ENCODE measurements at regions of chr1 and their contacts with region 1.

Region 1: GRCh38 chr1:232553050-232553754 is 76.7 kb downstream of the SIPA1L2 start:
- DNase-seq: peak; percentile 81 to 90 (median 88)
- ATAC-seq: peak; percentile 84 to 91 (median 90)
- H3K4me3 ChIP-seq: peak overlapping the region in 3 of 12 donors; percentile 13 to 26 (median 24)
- H3K27ac ChIP-seq: peak overlapping the region; percentile 24 to 80 (median 62)
- H3K4me1 ChIP-seq: peaks cover 3 to 83% (median 56%) of the 10 kb centered on the region in 12 donors
- H3K27me3 ChIP-seq: no peaks in the 10 kb centered on the region
- CTCF ChIP-seq: no peak
- POLR2A ChIP-seq: no peak

Region 2: GRCh38 chr1:231853588-231854207 is 699.5 kb before region 1 on chr1:
- intact Hi-C with region 1: loop called in 1 of 10 experiments (anchors 10 kb)
- DNase-seq: peak in 4 of 5 donors; percentile 36 to 84 (median 64)
- ATAC-seq: peak; percentile 53 to 62 (median 57)
- H3K4me3 ChIP-seq: no peak overlapping the region
- H3K27ac ChIP-seq: peak overlapping the region in 3 of 12 donors; percentile 20 to 47 (median 39)
- H3K4me1 ChIP-seq: peaks cover 0 to 33% (median 18%) of the 10 kb centered on the region in 12 donors
- H3K27me3 ChIP-seq: no peaks in the 10 kb centered on the region
- CTCF ChIP-seq: no peak
- POLR2A ChIP-seq: no peak

Region 3: DNA sequence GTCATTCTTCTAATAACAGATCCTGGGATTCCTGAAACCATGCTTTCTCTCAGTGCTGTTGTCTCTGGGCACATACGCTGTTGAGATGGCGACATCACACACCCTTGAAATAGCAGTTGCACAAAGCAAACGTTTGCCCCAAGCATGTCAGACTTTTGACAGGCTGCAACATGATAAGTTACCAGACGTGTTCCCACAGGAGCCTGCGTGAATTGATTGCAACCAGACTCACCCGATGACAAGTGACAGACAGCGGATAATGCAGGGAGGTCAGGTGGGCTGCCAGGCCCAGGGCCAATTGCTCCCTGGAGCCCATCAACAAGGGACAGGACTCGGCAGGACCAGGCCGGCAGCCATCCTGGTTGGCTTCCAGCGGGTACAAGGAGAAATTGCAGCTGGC is 234.1 kb before region 1 on chr1:
- intact Hi-C with region 1: loop called in 1 of 10 experiments (anchors 10 kb)
- DNase-seq: peak; percentile 87 to 95 (median 89)
- ATAC-seq: peak; percentile 95 to 96 (median 96)
- H3K4me3 ChIP-seq: no peak overlapping the region
- H3K27ac ChIP-seq: peak overlapping the region in 11 of 12 donors; percentile 5 to 95 (median 79)
- H3K4me1 ChIP-seq: peaks cover 0 to 17% (median 11%) of the 10 kb centered on the region in 12 donors
- H3K27me3 ChIP-seq: no peaks in the 10 kb centered on the region
- CTCF ChIP-seq: no peak
- POLR2A ChIP-seq: no peak

Region 4: GRCh38 chr1:232334246-232335210 is 218.7 kb before region 1 on chr1:
- intact Hi-C with region 1: no loop called
- DNase-seq: no peak
- ATAC-seq: no peak
- H3K4me3 ChIP-seq: no peak overlapping the region
- H3K27ac ChIP-seq: no peak overlapping the region
- H3K4me1 ChIP-seq: peaks cover 0 to 4% (median 1%) of the 10 kb centered on the region in 12 donors
- H3K27me3 ChIP-seq: no peaks in the 10 kb centered on the region
- CTCF ChIP-seq: no peak
- POLR2A ChIP-seq: no peak

Region 5: GRCh38 chr1:232457595-232457994 is 95.6 kb before region 1 on chr1:
- intact Hi-C with region 1: loop called in 1 of 10 experiments (anchors 10 kb)
- DNase-seq: no peak
- ATAC-seq: no peak
- H3K4me3 ChIP-seq: no peak overlapping the region
- H3K27ac ChIP-seq: peak overlapping the region in 2 of 12 donors; percentile 3 to 11
- H3K4me1 ChIP-seq: peaks cover 0 to 45% (median 20%) of the 10 kb centered on the region in 12 donors
- H3K27me3 ChIP-seq: no peaks in the 10 kb centered on the region
- CTCF ChIP-seq: no peak
- POLR2A ChIP-seq: no peak

Region 6: GRCh38 chr1:232508130-232508701 is 45.0 kb before region 1 on chr1:
- intact Hi-C with region 1: loop called in 1 of 10 experiments (anchors 5 kb)
- DNase-seq: peak in 1 of 5 donors; percentile 33
- ATAC-seq: peak in 3 of 4 donors; percentile 40 to 67 (median 65)
- H3K4me3 ChIP-seq: no peak overlapping the region
- H3K27ac ChIP-seq: peak overlapping the region in 1 of 12 donors; percentile 46
- H3K4me1 ChIP-seq: peaks cover 0 to 57% (median 30%) of the 10 kb centered on the region in 12 donors
- H3K27me3 ChIP-seq: no peaks in the 10 kb centered on the region
- CTCF ChIP-seq: peak in 6 of 12 donors; percentile 13 to 38 (median 30)
- POLR2A ChIP-seq: no peak

Region 7: DNA sequence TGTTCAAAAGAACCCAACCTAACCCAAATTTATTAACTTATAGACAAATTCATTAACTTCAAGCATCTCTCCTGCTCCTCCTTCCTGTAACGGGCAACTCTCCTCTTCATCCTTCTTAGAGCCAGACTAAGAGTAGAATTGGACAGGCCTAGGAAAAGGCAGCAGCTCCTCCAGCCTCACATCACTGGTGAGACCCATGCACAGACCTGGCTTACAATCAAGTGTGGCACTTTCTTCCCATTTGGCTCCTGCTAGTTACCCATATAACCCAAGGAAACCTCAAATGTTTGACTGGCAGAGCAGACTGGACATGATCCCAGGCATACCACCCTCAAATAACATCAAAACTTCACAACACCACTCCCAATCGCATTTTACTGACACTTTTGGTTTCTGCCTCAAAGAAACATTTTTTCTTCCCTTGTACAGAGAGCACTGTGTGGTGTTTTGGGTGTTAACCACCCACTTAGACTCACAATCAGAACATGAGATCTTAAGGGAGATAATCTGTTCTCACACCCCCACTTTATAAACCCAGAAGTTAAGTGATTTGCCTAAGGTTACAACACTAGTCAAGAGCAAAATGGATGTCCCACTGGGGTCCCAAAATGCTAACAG is 24.6 kb before region 1 on chr1:
- intact Hi-C with region 1: no loop called
- DNase-seq: no peak
- ATAC-seq: no peak
- H3K4me3 ChIP-seq: no peak overlapping the region
- H3K27ac ChIP-seq: peak overlapping the region in 1 of 12 donors; percentile 28
- H3K4me1 ChIP-seq: peaks cover 0 to 57% (median 25%) of the 10 kb centered on the region in 12 donors
- H3K27me3 ChIP-seq: no peaks in the 10 kb centered on the region
- CTCF ChIP-seq: no peak
- POLR2A ChIP-seq: no peak

Region 8: DNA sequence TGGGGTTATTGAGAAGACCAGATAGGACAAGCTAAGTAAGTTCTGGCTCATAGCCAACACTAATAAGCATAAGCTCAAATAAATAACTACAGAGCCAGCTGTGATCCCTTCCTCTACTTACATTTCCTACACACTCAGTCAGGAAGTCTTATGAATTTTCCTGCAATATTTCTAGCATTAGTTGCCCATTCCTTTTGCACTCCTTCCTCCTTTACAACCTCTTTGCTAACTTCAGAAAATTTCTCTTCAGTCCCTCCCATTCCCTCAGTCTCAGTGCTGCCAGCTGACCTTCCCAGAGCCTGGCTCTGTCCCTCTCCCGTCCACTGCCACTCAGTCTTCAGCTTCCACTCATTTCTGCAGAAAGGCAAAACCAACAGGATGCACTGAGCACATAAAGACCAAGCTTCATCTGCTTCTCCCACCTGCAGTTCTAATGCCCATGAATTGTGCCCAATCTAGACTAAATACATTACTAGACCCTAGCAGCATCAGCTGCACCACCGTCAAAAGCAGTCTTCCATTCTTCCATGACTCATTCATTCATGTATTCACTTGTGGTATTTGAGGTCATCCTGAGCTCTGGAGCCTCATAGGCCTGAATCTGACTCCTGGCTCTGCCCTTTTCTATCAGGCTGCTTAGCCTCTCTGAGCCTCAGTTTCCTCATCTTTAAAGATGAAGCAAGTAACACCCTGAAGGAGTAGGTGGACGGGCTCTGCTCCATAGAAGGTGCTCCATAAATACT is 131.3 kb after region 1 on chr1:
- intact Hi-C with region 1: no loop called
- DNase-seq: no peak
- ATAC-seq: no peak
- H3K4me3 ChIP-seq: no peak overlapping the region
- H3K27ac ChIP-seq: no peak overlapping the region
- H3K4me1 ChIP-seq: peaks cover 0 to 12% (median 0%) of the 10 kb centered on the region in 12 donors
- H3K27me3 ChIP-seq: no peaks in the 10 kb centered on the region
- CTCF ChIP-seq: no peak
- POLR2A ChIP-seq: no peak